HepG2 (cell line): ENCODE measurements at regions of chr12 and their contacts with region 1.

Region 1: DNA sequence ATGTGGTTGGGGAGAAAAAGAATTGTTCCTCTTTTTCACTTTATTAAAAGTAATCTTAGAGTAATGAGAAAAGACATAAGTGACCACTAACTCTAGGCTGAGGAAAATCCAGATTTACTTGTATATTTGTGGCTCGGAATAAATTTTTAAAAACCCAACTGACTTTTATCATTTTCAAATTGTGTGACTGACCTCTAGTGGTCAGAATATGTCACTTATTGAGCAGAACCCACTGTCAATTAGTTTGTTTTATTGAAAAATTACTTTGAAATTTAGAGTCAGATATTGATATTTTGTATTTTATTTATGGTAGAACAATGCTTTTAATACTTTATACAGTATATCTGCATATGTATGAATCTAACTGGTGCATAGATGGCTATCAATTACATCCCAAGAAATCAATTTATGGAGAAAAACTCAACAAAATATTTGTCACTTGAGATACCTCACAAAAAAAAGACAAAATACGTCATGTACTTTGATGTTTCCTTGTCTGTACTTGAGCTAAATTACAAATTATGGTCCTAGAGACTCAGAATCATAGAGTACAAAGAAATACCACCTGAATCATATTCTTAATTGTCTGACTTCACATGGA is 229.4 kb downstream of the CNTN1 start:
- DNase-seq: peak; percentile 8
- ATAC-seq: no peak
- H3K4me3 ChIP-seq: no peak overlapping the region
- H3K27ac ChIP-seq: no peak overlapping the region
- H3K4me1 ChIP-seq: no peaks in the 10 kb centered on the region
- H3K27me3 ChIP-seq: no peaks in the 10 kb centered on the region
- CTCF ChIP-seq: peak; percentile 40
- EP300 ChIP-seq: no peak
- POLR2A ChIP-seq: no peak
- RAD21 ChIP-seq: no peak

Region 2: DNA sequence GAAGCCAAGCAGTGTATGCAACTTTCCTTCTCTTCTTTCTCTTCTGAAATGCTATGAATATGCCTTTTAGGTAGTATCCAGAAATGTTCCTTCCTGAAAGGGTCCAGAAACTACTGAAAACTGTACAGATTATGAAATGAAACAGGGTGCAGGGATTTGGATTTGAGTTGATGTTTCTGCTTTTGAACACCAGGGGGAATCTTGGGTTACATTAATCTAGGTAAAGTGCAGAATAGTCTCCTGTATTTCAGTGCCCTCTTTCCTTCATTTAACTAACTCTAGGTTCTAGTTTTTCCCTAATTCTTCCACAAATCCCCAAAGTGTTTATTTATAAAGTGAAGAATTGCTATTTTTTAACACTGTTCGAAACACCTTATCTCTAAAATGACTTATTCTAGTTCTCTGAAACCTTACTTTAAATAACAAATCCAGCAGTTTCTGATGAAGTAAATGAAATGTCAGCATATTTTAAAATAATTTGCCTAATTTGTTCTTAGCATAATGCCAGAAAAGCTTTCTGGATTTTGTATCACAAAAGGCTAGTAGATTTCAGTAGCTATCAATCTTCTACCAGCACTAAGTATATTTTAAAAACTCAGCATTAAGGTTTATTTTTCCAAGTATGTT is 585.0 kb before region 1 on chr12:
- CTCF ChIA-PET with region 1: no interaction called
- POLR2A ChIA-PET with region 1: no interaction called
- in situ Hi-C with region 1: no loop called
- intact Hi-C with region 1: loop called (anchors 2 kb)
- DNase-seq: peak; percentile 2
- ATAC-seq: peak; percentile 74
- H3K4me3 ChIP-seq: no peak overlapping the region
- H3K27ac ChIP-seq: no peak overlapping the region
- H3K4me1 ChIP-seq: no peaks in the 10 kb centered on the region
- H3K27me3 ChIP-seq: no peaks in the 10 kb centered on the region
- CTCF ChIP-seq: peak; percentile 33
- EP300 ChIP-seq: no peak
- POLR2A ChIP-seq: no peak
- RAD21 ChIP-seq: no peak

Region 3: DNA sequence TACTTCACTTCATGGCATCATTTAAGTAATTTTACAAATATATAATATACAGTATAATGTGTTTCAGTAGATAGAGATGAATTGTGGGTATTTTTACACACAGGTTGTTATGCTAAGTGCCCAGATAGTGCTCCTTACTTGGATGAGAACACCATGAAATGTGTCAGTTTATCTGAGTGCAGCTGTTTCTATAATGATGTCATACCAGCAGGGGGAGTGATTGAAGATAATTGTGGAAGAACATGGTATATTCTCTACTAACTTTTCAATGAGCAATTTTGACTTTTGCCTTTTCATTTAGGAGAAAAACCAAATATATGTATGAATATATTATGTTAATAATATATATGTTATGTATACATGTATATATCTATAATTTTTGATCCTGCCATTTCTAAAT is 475.3 kb before region 1 on chr12:
- CTCF ChIA-PET with region 1: no interaction called
- POLR2A ChIA-PET with region 1: no interaction called
- in situ Hi-C with region 1: no loop called
- intact Hi-C with region 1: loop called (anchors 1 kb)
- DNase-seq: peak; percentile 12
- ATAC-seq: no peak
- H3K4me3 ChIP-seq: no peak overlapping the region
- H3K27ac ChIP-seq: no peak overlapping the region
- H3K4me1 ChIP-seq: no peaks in the 10 kb centered on the region
- H3K27me3 ChIP-seq: no peaks in the 10 kb centered on the region; a peak in 1 of 5 replicates
- CTCF ChIP-seq: peak; percentile 23; the same call in 1 of the 2 replicates
- EP300 ChIP-seq: no peak
- POLR2A ChIP-seq: no peak
- RAD21 ChIP-seq: no peak

Region 4: GRCh38 chr12:40622246-40622838 is 299.3 kb before region 1 on chr12:
- CTCF ChIA-PET with region 1: interaction called, 18 read pairs
- POLR2A ChIA-PET with region 1: no interaction called
- in situ Hi-C with region 1: loop called (anchors 5 kb)
- intact Hi-C with region 1: no loop called
- DNase-seq: peak; percentile 19
- ATAC-seq: peak; percentile 44; the same call in 2 of the 3 replicates
- H3K4me3 ChIP-seq: no peak overlapping the region
- H3K27ac ChIP-seq: no peak overlapping the region
- H3K4me1 ChIP-seq: no peaks in the 10 kb centered on the region
- H3K27me3 ChIP-seq: no peaks in the 10 kb centered on the region
- CTCF ChIP-seq: peak; percentile 58
- EP300 ChIP-seq: no peak
- POLR2A ChIP-seq: no peak
- RAD21 ChIP-seq: no peak